CD14-positive monocyte (primary cell): ENCODE measurements at regions of chr7 and their contacts with region 1.

Region 1: GRCh38 chr7:142782922-142783900 is 12.4 kb downstream of the PRSS2 start:
- DNase-seq: peak; percentile 72 to 77 (median 76)
- H3K4me3 ChIP-seq: peak overlapping the region in 1 of 3 experiments; percentile 63
- H3K4me3 Mint-ChIP-seq: peak overlapping the region; percentile 61 to 80
- H3K27ac ChIP-seq: no peak overlapping the region
- H3K27ac Mint-ChIP-seq: peak overlapping the region in 2 of 7 donors; percentile 50 to 58
- H3K4me1 ChIP-seq: peaks cover 4 to 6% of the 10 kb centered on the region in 2 donors
- H3K4me1 Mint-ChIP-seq: peaks cover 9% of the 10 kb centered on the region
- H3K27me3 ChIP-seq: no peaks in the 10 kb centered on the region
- H3K27me3 Mint-ChIP-seq: peaks cover 0 to 2% (median 0%) of the 10 kb centered on the region in 3 donors
- CTCF ChIP-seq: peak; percentile 96

Region 2: DNA sequence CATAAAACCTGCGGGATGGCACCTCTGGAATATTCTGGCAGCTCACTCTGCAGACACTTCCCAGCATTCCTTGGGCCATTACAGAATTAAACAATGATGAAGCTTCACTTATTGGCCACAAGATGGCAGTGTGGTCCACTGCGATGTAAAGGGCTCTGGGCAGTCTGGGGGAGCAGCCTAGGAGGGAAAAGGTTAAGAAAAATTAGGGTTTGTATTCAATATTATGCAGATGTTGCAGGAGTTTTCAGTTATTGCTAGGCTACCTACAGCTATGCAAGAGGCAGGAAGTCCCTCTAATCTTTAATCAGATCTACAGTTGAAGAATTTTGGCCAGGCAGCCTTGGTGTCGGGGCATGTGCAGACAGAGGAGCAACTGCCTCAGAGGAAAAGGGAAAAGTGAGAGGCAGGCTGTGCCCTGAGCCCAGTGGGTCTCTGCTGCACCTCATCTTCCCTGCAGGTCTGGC is 267.1 kb before region 1 on chr7:
- intact Hi-C with region 1: loop called in 1 of 2 experiments (anchors 10 kb)
- DNase-seq: peak; percentile 43 to 63 (median 60)
- H3K4me3 ChIP-seq: no peak overlapping the region
- H3K4me3 Mint-ChIP-seq: no peak overlapping the region
- H3K27ac ChIP-seq: no peak overlapping the region
- H3K27ac Mint-ChIP-seq: no peak overlapping the region
- H3K4me1 ChIP-seq: peaks cover 0 to 3% of the 10 kb centered on the region in 2 donors
- H3K4me1 Mint-ChIP-seq: peaks cover 10% of the 10 kb centered on the region
- H3K27me3 ChIP-seq: no peaks in the 10 kb centered on the region
- H3K27me3 Mint-ChIP-seq: peaks cover 0 to 4% (median 3%) of the 10 kb centered on the region in 3 donors
- CTCF ChIP-seq: peak; percentile 85

Region 3: DNA sequence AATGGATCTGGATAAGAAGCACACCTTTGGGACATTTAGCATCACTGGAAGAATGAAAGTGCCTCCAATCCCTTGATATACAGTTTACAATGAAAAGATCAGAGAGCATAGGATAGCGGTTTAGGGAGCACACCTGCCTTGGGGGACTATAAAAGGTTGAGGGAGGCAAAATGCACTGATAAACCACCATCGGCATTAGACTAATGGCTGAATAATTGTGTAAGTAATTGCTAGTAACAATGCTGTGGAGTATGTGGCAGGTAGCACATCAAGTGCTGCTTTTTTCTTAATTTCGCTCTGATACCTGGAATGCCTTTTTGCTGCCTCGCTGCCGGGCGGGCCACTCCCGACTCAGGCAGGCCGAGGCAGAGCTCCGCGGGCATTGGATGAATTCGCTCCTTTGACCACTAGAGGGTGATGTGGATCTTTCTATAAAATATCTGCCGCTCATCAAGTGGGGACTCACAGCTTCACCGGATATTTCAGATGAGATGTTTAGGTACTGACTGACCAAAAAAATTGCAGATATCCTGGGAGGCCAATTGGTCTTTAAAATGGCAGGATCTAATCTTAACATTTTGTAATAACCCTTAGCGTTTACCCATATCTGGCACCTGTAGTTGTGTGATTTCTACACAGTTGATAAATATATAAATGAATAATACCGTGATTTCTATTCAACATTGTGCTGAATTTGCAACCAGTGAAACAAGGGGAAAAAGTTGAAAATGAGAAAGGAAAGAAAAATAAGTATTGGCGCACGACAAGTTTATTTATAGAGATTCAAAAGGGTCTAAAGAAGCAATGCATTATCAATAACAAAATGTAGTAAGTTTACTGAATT is 150.7 kb before region 1 on chr7:
- intact Hi-C with region 1: loop called in 1 of 2 experiments (anchors 5 kb)
- DNase-seq: peak; percentile 40 to 68 (median 55)
- H3K4me3 ChIP-seq: no peak overlapping the region
- H3K4me3 Mint-ChIP-seq: peak overlapping the region in 1 of 2 donors; percentile 12
- H3K27ac ChIP-seq: no peak overlapping the region
- H3K27ac Mint-ChIP-seq: no peak overlapping the region
- H3K4me1 ChIP-seq: no peaks in the 10 kb centered on the region
- H3K4me1 Mint-ChIP-seq: peaks cover 10% of the 10 kb centered on the region
- H3K27me3 ChIP-seq: peaks cover 0 to 3% of the 10 kb centered on the region in 2 donors
- H3K27me3 Mint-ChIP-seq: peaks cover 3 to 8% (median 8%) of the 10 kb centered on the region in 3 donors
- CTCF ChIP-seq: peak; percentile 93